Activated naive CD4-positive, alpha-beta T cell treated with anti-CD3 and anti-CD28 coated beads for 36 hours (primary cell): ENCODE measurements at regions of chr6 and their contacts with region 1.

Region 1: GRCh38 chr6:148144917-148145521 is 197.6 kb upstream of the SASH1 start:
- DNase-seq: peak; percentile 83
- H3K4me3 Mint-ChIP-seq: no peak overlapping the region
- H3K27ac Mint-ChIP-seq: no peak overlapping the region
- H3K4me1 Mint-ChIP-seq: peaks cover 16% of the 10 kb centered on the region
- H3K27me3 Mint-ChIP-seq: no peaks in the 10 kb centered on the region

Region 2: GRCh38 chr6:146850238-146850896 is 1294.7 kb before region 1 on chr6:
- CTCF ChIA-PET with region 1: no interaction called
- intact Hi-C with region 1: loop called (anchors 5 kb)
- DNase-seq: peak; percentile 72
- H3K4me3 Mint-ChIP-seq: no peak overlapping the region
- H3K27ac Mint-ChIP-seq: peak overlapping the region; percentile 71
- H3K4me1 Mint-ChIP-seq: peaks cover 31% of the 10 kb centered on the region
- H3K27me3 Mint-ChIP-seq: peaks cover 7% of the 10 kb centered on the region

Region 3: GRCh38 chr6:147202516-147203312 is 942.3 kb before region 1 on chr6:
- CTCF ChIA-PET with region 1: no interaction called
- intact Hi-C with region 1: loop called (anchors 1 kb)
- DNase-seq: peak; percentile 88
- H3K4me3 Mint-ChIP-seq: peak overlapping the region; percentile 83
- H3K27ac Mint-ChIP-seq: peak overlapping the region; percentile 99
- H3K4me1 Mint-ChIP-seq: peaks cover 20% of the 10 kb centered on the region
- H3K27me3 Mint-ChIP-seq: no peaks in the 10 kb centered on the region

Region 4: DNA sequence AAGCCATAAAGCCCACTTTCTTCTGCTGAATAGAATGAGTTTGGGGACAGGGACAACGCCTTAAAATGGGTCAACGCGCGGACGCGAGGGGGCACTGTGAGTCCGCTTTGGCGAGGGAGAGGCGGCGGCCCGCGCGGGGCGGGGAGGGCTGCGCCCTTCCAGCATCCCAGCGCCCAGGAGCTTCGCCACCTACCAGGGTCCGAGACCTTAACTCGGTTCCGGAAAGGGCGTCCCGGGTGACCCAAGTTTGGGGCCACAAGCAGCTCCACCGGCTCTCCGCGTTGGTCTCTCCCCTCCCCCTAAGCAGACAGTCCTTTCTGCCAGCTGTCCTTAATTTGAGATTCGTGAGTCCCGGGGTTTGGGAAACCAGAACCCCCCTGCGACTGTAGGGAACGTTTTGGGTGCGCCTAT is 638.3 kb before region 1 on chr6:
- CTCF ChIA-PET with region 1: no interaction called
- intact Hi-C with region 1: loop called (anchors 5 kb)
- DNase-seq: peak; percentile 72
- H3K4me3 Mint-ChIP-seq: no peak overlapping the region
- H3K27ac Mint-ChIP-seq: no peak overlapping the region
- H3K4me1 Mint-ChIP-seq: peaks cover 12% of the 10 kb centered on the region
- H3K27me3 Mint-ChIP-seq: peaks cover 63% of the 10 kb centered on the region

Region 5: DNA sequence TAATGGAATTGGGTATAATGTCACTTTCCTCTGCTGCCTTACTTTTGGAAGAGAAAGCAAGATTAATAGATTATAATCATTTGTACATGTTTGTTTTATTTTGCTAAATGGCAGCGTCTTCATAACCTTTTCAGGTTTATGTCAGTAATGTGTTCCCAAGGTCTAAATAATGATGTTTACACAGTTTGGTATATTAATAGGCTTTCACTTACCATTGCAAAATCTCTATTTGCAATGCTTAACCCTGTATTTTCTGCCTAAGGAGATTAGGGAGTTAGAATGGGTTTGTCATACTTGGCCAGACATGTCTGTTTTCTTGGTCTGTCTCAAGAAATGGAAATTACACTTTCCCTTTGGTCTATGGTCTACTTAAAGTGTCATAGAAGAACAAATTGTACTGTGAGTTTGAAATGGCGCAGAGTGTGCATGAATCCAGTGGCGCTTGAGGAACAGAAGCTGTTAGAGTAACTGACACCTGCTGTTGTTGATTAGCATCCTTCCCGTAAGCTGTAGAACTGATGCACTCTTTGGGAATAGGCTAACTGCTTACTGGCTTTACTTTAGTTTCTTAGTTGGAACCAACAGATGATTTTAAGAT is 375.4 kb before region 1 on chr6:
- CTCF ChIA-PET with region 1: no interaction called
- intact Hi-C with region 1: no loop called
- DNase-seq: no peak
- H3K4me3 Mint-ChIP-seq: no peak overlapping the region
- H3K27ac Mint-ChIP-seq: no peak overlapping the region
- H3K4me1 Mint-ChIP-seq: no peaks in the 10 kb centered on the region
- H3K27me3 Mint-ChIP-seq: no peaks in the 10 kb centered on the region

Region 6: GRCh38 chr6:148112851-148113319 is 32.1 kb before region 1 on chr6:
- CTCF ChIA-PET with region 1: no interaction called
- intact Hi-C with region 1: no loop called
- DNase-seq: no peak
- H3K4me3 Mint-ChIP-seq: no peak overlapping the region
- H3K27ac Mint-ChIP-seq: no peak overlapping the region
- H3K4me1 Mint-ChIP-seq: peaks cover 2% of the 10 kb centered on the region
- H3K27me3 Mint-ChIP-seq: peaks cover 10% of the 10 kb centered on the region

Region 7: DNA sequence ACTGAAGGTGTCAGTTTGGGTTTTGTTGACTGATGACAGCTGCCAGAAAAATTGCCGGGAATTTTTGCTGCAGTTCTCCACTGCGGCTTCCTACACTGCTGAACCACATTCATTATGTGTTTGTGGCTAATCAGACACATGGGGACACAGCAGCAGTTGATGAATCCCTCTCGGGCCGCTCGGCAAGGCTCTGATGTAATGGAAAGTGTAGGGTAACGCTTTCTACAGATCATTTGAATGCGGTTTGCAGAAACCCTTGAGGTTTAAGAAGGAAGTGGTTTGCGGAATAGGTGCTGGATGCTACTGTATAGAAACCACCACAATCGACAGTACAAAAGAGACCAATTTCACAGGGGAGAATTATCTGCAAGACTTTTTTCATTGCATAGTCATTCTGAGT is 59.0 kb after region 1 on chr6:
- CTCF ChIA-PET with region 1: interaction called, 3 read pairs
- intact Hi-C with region 1: loop called (anchors 1 kb)
- DNase-seq: peak; percentile 87
- H3K4me3 Mint-ChIP-seq: peak overlapping the region; percentile 48
- H3K27ac Mint-ChIP-seq: peak overlapping the region; percentile 85
- H3K4me1 Mint-ChIP-seq: peaks cover 50% of the 10 kb centered on the region
- H3K27me3 Mint-ChIP-seq: peaks cover 72% of the 10 kb centered on the region

Region 8: GRCh38 chr6:148464319-148465010 is 319.4 kb after region 1 on chr6:
- CTCF ChIA-PET with region 1: interaction called, 3 read pairs
- intact Hi-C with region 1: loop called (anchors 1 kb)
- DNase-seq: peak; percentile 72
- H3K4me3 Mint-ChIP-seq: no peak overlapping the region
- H3K27ac Mint-ChIP-seq: no peak overlapping the region
- H3K4me1 Mint-ChIP-seq: no peaks in the 10 kb centered on the region
- H3K27me3 Mint-ChIP-seq: peaks cover 13% of the 10 kb centered on the region